GM10248 (cell line): ENCODE measurements at regions of chr5 and their contacts with region 1.

Region 1: DNA sequence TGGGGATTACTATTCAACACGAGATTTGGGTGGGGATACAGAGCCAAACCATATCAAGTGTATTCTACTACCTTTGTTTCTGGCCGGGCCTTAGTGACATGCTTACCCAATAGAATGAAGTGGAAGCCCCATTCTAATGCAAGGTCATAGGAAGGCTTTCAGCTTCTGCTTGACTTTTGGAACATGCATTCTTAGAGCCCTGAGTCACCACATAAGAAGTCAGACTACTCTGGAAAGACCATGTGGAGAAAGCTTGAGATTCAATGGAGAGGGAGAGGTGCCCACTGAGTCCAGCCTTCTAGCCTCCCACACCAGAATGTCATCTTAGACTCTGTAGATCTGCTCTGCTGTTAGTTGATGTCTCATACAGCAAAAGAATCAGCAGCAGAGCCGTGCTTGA is 155.7 kb upstream of the FBN2 start:
- DNase-seq: no peak
- CTCF ChIP-seq: no peak

Region 2: GRCh38 chr5:128674825-128675446 is 18.8 kb before region 1 on chr5:
- CTCF ChIA-PET with region 1: interaction called, 12 read pairs
- POLR2A ChIA-PET with region 1: no interaction called
- DNase-seq: peak; percentile 16
- CTCF ChIP-seq: peak; percentile 58

Region 3: GRCh38 chr5:128988476-128988875 is 294.7 kb after region 1 on chr5:
- CTCF ChIA-PET with region 1: no interaction called
- POLR2A ChIA-PET with region 1: no interaction called
- DNase-seq: no peak
- CTCF ChIP-seq: no peak